ENCODE measurements at regions of chr17 and their contacts with region 1.

Region 1: DNA sequence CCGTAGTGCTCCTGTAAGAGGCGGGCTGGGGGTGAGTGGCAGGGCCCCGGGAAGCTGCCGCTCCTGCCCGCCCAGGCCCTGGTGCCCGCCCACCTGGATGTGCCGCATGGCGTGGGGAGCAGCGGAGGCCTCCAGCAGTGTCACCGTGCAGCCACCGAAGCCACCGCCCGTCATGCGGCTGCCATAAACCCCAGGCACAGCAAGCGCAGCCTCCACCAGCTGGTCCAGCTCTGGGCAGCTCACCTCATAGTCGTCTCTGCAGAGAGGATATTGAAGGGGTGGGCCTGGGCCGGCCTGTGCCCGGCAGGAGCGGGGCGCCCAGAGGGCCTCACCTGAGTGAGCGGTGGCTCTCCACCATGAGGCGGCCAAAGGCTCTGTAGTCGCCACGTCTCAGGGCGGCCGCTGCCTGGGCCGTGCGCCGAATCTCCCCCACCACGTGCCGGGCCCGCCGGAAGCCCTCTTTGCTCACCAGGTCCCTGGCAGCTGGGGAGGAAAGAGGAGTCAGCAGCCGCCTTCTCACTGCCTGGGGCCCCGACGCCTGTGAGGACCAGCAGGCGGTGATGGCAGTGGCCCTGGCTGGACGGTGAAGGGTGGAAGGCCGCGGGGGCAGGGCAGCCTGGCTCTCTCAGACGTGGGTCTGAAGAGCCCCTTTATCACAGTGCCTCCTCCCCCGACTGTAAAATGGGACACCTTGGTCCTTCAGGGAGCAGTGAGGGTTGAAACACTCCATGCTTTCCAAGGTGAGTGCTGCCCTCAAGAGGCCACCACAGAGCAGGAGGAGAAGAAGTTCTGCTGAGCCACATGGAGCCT is 6.7 kb downstream of the GALK1 start:
- DNase-seq: no peak
- H3K4me3 ChIP-seq: no peak overlapping the region
- H3K27ac ChIP-seq: no peak overlapping the region
- H3K4me1 ChIP-seq: peaks cover 0 to 5% (median 2%) of the 10 kb centered on the region in 4 experiments; a peak in 4 of 7 replicates
- H3K27me3 ChIP-seq: peaks cover 0 to 2% (median 0%) of the 10 kb centered on the region in 4 experiments; a peak in 2 of 7 replicates
- CTCF ChIP-seq: peak; percentile 49 to 69 (median 53); a peak in 3 of 4 replicates
- EP300 ChIP-seq: no peak
- POLR2A ChIP-seq: no peak
- RAD21 ChIP-seq: peak; percentile 48 to 55

Region 2: GRCh38 chr17:75743625-75744215 is 14.6 kb before region 1 on chr17:
- CTCF ChIA-PET with region 1: interaction called, 177 read pairs
- POLR2A ChIA-PET with region 1: interaction called, 3 read pairs
- DNase-seq: no peak
- H3K4me3 ChIP-seq: no peak overlapping the region
- H3K27ac ChIP-seq: no peak overlapping the region
- H3K4me1 ChIP-seq: no peaks in the 10 kb centered on the region
- H3K27me3 ChIP-seq: no peaks in the 10 kb centered on the region
- CTCF ChIP-seq: no peak
- EP300 ChIP-seq: no peak
- POLR2A ChIP-seq: no peak
- RAD21 ChIP-seq: no peak